ENCODE measurements at regions of chr14 and their contacts with region 1.

Region 1: DNA sequence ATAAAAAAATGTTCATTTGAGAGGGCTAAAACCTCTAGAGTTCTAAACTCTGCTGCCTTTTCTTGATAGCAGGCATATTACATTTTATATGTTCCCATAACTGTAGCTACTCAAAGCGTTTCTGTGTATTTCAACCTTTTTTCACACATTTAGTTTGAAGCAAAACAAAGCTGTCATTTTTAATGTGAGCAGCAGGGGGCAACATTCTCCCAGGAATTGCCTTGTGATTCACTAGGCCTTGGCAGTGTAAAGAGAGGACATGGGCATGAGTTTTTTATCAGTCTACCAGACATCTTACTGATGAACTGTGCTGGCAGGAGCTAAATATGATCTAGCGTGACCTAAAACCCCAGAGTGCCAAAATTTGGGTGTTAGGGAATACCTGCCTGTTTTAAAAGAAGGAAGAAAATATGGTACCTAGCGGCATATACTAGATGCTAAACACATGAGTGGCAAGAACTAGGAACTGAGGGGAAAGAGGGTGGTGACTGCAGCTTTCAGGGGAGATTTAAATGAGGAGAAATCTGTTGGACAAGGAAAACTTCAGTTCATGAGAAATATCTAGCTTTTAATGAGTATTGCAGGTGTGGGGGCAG is 65.3 kb downstream of the IFT43 start:
- DNase-seq: peak in 5 of 10 donors; percentile 17 to 69 (median 67)

Region 2: GRCh38 chr14:75822522-75823141 is 228.3 kb before region 1 on chr14:
- intact Hi-C with region 1: no loop called
- DNase-seq: no peak

Region 3: DNA sequence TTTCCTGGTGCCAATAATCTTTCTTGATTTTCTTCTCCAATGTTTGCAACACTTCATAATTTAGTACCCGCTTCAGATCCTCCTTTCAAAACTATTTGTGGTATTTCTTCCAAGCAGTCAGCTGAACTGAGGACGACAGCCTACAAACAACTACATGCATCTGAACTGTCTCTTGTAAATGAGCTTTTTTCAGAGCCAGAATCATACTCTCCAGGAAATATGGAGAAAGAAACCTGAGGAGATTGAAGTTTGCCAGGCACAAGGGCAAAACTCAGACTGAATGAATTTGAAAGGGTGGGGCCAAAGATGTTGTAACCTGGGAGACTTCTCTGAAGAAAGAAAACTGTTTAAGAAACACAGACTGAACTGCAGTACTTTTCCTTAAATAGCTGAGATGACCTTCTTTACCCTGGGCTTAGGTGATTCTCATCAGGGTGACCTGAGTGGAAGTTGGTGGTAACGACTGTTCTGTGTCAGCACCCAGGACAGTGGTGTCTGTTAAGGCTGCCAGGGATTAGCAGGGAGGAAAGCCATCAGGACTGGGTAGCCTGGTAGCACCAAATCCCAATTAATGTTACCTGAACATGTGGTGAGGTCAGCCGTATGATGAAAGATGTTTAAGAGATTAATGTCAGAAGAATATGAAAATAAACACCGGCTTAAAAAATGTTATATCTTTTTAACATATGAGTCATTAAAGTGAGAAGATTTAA is 164.1 kb before region 1 on chr14:
- intact Hi-C with region 1: no loop called
- DNase-seq: no peak

Region 4: DNA sequence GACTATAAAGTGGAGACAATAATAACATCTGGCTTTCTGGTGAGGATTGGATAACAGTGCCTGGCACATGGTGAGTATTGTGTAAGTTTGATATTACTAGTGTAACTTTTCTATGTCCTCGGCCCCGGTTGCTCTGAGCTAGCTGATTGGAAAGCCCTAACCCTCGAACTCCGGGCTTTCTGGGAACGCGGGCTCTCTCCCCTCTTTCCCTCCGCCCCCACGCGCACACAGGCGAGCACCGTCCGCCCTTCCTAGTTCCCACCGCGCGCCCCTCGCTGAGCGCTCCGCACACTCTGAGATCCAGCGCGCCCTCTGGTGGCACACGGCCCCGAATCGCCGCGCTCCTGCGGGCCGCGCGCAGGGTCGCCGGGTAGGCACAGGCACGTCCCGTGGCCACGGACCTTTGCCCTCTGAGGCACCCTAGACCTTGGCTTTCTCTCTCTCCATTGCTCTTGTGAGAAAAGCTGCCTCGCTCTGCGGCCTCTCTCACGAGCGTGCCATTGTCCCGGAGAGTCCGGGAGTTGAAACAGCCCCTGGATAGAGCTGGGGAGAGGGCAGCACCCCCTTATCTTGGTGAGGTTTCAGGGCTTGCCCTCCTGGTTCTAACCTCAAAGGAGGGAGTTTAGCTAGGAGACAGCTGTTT is 301.9 kb after region 1 on chr14:
- intact Hi-C with region 1: loop called (anchors 1 kb)
- DNase-seq: peak in 8 of 10 donors; percentile 27 to 90 (median 62)

Region 5: DNA sequence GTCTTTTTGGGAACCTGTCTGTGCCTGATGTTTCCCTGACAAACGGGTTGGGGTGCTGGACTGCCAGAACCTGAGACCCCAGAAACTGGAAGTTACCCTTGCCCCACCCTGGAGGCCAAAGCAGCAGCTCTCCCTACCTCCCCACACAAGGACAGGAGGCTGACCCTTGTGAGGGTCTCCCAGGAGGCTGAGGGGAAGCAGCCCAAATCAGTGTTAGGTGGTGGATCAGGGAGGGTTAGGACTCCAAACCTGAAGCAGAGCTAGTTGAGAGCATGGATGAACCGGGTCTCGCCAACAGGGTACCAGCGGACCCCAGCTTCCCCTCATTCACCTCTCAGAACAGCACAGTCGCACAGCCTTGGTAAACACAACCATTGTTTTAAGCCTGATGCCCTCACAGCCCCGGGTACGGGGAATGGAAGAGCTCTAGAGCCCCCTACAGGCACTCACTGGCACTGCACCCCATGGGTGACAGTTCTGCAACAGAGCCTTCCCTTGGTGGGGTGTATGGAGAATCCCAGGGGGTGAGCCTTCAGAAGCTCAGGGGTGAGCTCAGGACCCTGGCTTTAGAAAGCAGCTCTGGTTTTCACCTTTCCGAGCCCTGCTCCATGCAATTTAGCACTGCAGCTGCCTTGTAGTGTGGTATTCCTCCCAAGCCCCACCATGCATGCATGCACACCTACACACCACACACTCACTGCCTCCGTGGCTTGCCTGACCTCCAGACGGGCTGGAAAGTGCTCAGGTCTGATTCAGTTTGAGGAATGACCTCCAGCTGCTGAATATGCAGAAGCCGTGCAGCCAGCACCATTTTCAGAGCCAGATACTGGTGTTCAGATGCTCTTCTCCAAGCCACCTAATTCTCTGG is 336.3 kb after region 1 on chr14:
- intact Hi-C with region 1: loop called (anchors 1 kb)
- DNase-seq: peak; percentile 62 to 96 (median 80)

Region 6: GRCh38 chr14:76647697-76648298 is 596.9 kb after region 1 on chr14:
- intact Hi-C with region 1: loop called (anchors 2 kb)
- DNase-seq: peak in 1 of 10 donors; percentile 31